HCT116 (cell line): ENCODE measurements at regions of chr20 and their contacts with region 1.

Region 1: DNA sequence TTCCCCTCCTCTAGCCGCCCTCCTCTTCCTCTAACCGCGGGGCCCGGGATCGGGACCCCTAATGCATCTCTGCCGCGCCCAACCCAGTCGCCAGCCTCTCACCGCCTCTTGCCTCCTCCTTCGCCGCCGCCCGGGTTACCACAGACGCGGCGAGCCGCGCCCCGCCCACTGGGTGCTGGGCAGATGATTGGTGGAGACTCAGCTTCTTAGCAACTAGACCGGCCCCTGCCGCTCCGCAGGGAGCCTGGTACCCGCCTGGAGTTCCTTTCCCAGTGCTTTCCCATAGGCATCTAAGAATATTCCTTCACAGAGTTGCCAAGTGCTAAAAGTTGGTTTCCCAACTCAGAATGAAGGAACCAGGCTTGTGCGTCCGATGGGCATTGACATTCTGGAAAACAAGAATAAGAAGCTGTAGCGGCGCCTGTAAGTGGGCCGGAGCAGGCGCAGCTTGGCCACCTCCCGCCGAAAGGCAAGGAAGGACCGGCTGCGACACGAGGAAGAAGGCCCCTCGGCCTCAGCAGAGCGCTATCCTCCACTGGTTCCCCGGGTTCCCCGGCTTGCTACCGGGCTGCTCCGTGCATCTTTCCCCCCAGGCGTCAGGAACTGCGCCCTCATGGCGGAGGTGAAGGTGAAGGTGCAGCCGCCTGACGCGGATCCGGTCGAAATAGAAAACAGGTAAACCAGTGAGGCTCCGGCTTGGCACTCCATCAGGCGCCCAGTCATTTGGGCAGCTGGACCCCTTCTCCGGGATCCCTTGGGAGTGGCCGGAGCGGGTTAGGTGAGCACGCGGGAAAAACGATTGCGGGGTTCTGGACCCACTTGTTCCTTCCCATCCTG is at the starts of genes DZANK1 and POLR3F:
- DNase-seq: peak; percentile 91
- ATAC-seq: peak; percentile 98
- H3K4me3 ChIP-seq: peak within 1 kb of the TSS; percentile 82 to 99
- H3K27ac ChIP-seq: peak within 1 kb of the TSS; percentile 91
- H3K4me1 ChIP-seq: peaks cover 13% of the 10 kb centered on the region in 2 experiments
- H3K27me3 ChIP-seq: no peaks in the 10 kb centered on the region
- CTCF ChIP-seq: no peak
- POLR2A ChIP-seq: peak; percentile 42
- RAD21 ChIP-seq: no peak
- total RNA-seq, gene DZANK1: 1.7 TPM
- total RNA-seq, gene POLR3F: 11.4 TPM

Region 2: DNA sequence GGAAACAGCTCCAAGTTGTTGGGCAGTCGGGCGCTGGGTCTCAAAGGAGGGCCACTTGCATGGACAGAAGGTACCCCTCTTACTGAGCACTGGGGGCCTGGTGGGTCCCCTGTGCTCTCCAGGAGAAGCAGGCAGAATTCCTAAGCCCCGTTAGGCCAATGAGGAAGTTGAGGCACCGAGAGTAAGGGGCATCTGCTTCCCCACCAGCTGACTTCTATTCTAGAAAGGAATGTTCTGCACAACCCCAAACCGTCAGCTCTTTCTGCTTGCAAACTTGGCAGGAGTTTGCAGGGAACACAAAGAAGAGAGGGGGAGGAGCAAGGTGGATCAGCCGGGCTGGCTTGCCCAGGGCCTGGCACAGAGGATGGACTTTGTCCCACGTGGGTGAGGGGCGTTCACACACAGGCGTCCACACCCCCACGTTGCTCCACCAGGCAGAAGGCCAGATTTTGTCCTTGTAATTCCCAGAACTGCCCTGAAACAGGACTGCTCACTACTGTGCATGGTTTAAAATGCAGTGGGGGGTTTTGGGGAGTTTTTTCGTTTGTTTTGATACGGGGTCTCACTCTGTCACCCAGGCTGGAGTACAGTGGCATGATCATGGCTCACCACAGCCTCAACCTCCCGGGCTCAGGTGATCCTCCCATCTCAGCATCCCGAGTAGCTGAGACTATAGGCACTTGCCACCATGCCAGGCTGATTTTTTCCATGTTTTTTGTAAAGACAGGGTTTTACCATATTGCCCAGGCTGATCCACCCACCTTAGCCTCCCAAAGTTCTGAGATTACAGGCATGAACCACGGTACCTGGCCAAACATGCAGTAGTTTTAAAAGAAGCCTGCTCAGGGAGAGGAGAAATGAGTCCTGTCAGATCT is 591.8 kb before region 1 on chr20:
- CTCF ChIA-PET with region 1: no interaction called
- POLR2A ChIA-PET with region 1: no interaction called
- RAD21 ChIA-PET with region 1: no interaction called
- intact Hi-C with region 1: no loop called
- DNase-seq: no peak
- ATAC-seq: no peak
- H3K4me3 ChIP-seq: no peak overlapping the region
- H3K27ac ChIP-seq: no peak overlapping the region; the same call in 1 of the 2 replicates
- H3K4me1 ChIP-seq: peaks cover 23 to 32% of the 10 kb centered on the region in 2 experiments
- H3K27me3 ChIP-seq: no peaks in the 10 kb centered on the region; the same call in 1 of the 2 replicates
- CTCF ChIP-seq: no peak
- POLR2A ChIP-seq: no peak
- RAD21 ChIP-seq: no peak

Region 3: GRCh38 chr20:18197382-18198131 is 269.6 kb before region 1 on chr20:
- CTCF ChIA-PET with region 1: no interaction called
- POLR2A ChIA-PET with region 1: no interaction called
- RAD21 ChIA-PET with region 1: no interaction called
- intact Hi-C with region 1: no loop called
- DNase-seq: peak; percentile 71
- ATAC-seq: peak; percentile 93
- H3K4me3 ChIP-seq: peak overlapping the region in 1 of 2 experiments; percentile 16; a peak in 2 of 4 replicates
- H3K27ac ChIP-seq: peak overlapping the region; percentile 51
- H3K4me1 ChIP-seq: peaks cover 12 to 22% of the 10 kb centered on the region in 2 experiments
- H3K27me3 ChIP-seq: no peaks in the 10 kb centered on the region
- CTCF ChIP-seq: peak in 2 of 3 experiments; percentile 51 to 57; a peak in 4 of 6 replicates
- POLR2A ChIP-seq: no peak
- RAD21 ChIP-seq: peak; percentile 52

Region 4: GRCh38 chr20:18428490-18429173 is 38.5 kb before region 1 on chr20:
- CTCF ChIA-PET with region 1: no interaction called
- POLR2A ChIA-PET with region 1: no interaction called
- RAD21 ChIA-PET with region 1: no interaction called
- intact Hi-C with region 1: loop called (anchors 1 kb)
- DNase-seq: no peak
- ATAC-seq: no peak
- H3K4me3 ChIP-seq: no peak overlapping the region
- H3K27ac ChIP-seq: no peak overlapping the region
- H3K4me1 ChIP-seq: peaks cover 0 to 14% of the 10 kb centered on the region in 2 experiments; a peak in 2 of 4 replicates
- H3K27me3 ChIP-seq: no peaks in the 10 kb centered on the region
- CTCF ChIP-seq: no peak
- POLR2A ChIP-seq: no peak
- RAD21 ChIP-seq: no peak

Region 5: DNA sequence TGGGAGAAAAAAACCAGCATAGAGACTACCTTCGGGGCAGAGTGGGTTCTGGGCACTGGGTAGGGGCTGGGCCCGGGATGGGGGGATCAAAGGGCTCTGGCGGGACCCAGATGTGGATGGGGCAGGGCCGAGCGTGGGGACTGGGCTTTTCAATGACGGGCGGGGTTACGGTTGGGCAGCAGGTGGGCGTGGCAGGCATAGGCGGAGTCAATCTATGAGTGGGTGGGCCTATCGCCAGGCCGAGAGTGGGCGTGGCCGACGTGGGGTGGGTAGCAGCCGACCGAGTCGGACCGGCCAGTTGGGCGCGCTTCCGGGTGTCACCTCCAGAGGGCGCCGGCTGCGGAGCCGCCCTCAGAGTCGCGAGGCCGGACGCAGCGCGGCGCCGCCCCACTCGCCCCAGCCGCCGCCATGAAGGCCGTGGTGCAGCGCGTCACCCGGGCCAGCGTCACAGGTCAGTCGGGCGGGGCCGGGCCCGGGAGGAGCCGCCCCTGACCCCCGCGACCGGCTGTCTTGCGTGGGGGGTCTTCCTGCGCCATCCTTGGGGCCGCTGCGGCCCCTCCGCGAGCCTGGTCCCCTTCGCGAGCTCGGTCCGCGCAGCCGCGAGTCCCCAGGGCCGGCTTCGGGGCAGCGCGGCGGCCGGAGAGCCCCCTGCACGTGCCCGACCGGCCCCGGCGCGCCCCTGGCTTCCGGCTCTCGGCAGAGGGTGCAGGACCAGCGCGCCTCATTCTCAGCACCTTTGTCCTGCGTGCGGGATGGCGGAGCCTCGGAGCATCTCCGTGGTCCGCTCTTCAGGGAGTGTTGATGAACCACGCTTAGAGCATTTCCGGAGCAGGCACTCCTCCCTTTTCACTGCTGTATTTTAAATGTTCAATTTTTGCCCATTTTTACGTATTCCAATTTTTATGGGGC is 120.8 kb after region 1 on chr20 and contains the start of gene DTD1:
- CTCF ChIA-PET with region 1: no interaction called
- POLR2A ChIA-PET with region 1: no interaction called
- RAD21 ChIA-PET with region 1: no interaction called
- intact Hi-C with region 1: loop called (anchors 2 kb)
- DNase-seq: peak; percentile 83
- ATAC-seq: peak; percentile 93
- H3K4me3 ChIP-seq: peak within 1 kb of the TSS; percentile 71 to 82
- H3K27ac ChIP-seq: peak within 1 kb of the TSS; percentile 67
- H3K4me1 ChIP-seq: peaks cover 8 to 17% of the 10 kb centered on the region in 2 experiments; a peak in 3 of 4 replicates
- H3K27me3 ChIP-seq: no peaks in the 10 kb centered on the region
- CTCF ChIP-seq: peak in 2 of 3 experiments; percentile 51 to 77; a peak in 4 of 6 replicates
- POLR2A ChIP-seq: peak; percentile 27
- RAD21 ChIP-seq: no peak
- total RNA-seq, gene DTD1: 54.5 TPM

Region 6: DNA sequence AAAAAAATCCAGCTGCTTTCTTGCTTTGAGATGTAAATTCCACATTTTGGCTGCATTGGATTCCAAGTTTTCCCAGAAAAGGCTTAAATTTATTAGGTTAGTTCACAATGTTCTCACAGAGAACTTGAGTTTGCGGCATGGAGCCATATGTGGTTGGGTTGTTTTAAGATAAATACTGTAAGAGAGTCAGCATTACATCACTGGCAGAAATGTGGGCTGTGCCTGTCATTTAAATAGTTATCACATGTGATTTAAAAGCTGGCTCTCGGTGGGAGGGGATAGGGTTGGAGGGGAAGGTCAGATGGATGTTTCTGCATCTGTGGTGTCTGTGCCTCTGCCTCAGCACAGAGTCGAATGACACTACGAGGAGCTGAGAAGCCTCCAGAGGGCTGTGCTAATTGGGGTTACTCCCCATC is 272.6 kb after region 1 on chr20:
- CTCF ChIA-PET with region 1: no interaction called
- POLR2A ChIA-PET with region 1: no interaction called
- RAD21 ChIA-PET with region 1: no interaction called
- intact Hi-C with region 1: no loop called
- DNase-seq: no peak
- ATAC-seq: no peak
- H3K4me3 ChIP-seq: no peak overlapping the region
- H3K27ac ChIP-seq: no peak overlapping the region
- H3K4me1 ChIP-seq: peaks cover 0 to 8% of the 10 kb centered on the region in 2 experiments; a peak in 1 of 4 replicates
- H3K27me3 ChIP-seq: no peaks in the 10 kb centered on the region
- CTCF ChIP-seq: no peak
- POLR2A ChIP-seq: no peak
- RAD21 ChIP-seq: no peak